ENCODE measurements at regions of chr12 and their contacts with region 1.

Region 1: DNA sequence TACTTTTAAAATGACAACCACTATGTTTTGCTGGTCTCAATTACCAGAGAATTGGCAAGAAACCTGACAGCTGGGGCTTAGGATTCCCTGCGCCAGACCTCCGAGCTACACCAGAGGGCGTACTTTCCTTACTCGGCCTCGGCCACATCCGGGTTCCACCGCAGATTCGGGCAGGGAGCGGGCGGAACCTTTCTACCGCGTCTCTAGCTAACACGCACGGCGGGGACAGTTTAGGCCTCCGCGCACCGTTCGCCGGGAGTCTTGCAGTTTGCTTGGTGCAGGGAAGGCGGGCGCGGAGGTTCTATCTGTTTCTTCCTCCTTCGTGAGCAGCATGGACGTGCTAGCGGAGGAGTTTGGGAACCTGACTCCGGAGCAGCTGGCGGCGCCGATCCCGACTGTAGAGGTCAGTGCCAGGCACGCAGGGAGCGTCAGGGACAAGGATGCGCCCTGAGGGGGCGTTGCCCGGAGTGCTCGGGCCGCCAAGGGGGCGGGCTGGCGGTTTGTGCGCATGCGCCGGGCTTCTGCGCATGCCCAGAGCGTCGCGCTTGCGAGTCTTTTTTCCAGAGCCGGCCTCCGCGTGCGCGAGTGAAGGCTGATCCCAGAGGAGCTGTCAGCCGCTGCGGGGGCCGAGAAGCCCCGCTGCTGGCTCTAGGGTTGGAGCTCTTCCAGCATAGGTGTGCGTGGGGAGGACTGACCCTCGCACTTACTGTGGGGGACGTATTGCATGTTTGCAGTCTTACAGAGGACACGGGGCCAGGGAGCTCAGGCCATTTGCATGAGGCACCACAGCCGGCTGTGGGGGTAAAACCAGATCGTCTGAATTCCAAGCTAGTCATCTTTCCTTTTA is at the start of gene POLR3B:
- DNase-seq: peak; percentile 95
- CTCF ChIP-seq: peak; percentile 87

Region 2: DNA sequence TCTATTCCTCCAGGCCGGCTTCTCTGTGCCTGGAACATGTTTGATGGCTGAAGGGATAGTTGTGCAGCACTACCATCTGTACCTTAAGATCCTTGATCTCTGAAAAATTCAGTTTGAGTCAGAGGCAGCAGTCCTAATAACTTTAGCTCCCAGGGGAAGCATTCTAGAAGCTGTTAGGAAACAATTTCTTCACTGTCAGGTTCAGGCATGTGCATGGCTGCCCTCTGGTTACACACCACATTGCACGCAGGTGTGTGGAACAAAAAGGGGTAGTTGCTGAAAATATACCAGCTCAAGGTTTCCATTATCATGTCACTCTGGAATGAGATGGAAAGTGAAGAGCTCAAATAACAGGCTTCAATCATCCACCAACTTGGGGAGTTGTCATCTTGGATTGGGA is 1820.9 kb before region 1 on chr12:
- CTCF ChIA-PET with region 1: no interaction called
- POLR2A ChIA-PET with region 1: no interaction called
- DNase-seq: no peak
- CTCF ChIP-seq: no peak

Region 3: DNA sequence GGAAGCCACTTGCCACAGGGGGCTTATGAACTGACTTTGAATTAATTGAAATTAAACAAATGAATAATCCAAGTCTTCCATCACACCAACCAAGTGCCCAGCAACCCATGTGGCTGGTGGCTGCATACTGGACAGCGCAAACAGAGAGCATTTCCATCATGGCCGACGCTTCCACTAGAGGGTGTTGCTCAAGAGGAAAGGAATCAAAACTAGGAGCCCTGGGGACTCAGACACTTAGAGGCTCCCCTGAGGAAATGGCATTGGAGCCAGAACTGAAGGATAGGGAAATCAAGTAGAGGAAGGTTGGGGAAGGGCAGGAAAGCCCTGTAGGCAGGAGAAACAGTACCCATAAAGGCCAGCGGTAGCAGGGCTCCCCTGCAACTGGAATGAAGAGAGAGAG is 168.4 kb before region 1 on chr12:
- CTCF ChIA-PET with region 1: no interaction called
- POLR2A ChIA-PET with region 1: no interaction called
- DNase-seq: no peak
- CTCF ChIP-seq: no peak

Region 4: GRCh38 chr12:106223485-106224354 is 134.1 kb before region 1 on chr12:
- CTCF ChIA-PET with region 1: interaction called, 10 read pairs
- POLR2A ChIA-PET with region 1: no interaction called
- DNase-seq: peak; percentile 83
- CTCF ChIP-seq: peak; percentile 99

Region 5: DNA sequence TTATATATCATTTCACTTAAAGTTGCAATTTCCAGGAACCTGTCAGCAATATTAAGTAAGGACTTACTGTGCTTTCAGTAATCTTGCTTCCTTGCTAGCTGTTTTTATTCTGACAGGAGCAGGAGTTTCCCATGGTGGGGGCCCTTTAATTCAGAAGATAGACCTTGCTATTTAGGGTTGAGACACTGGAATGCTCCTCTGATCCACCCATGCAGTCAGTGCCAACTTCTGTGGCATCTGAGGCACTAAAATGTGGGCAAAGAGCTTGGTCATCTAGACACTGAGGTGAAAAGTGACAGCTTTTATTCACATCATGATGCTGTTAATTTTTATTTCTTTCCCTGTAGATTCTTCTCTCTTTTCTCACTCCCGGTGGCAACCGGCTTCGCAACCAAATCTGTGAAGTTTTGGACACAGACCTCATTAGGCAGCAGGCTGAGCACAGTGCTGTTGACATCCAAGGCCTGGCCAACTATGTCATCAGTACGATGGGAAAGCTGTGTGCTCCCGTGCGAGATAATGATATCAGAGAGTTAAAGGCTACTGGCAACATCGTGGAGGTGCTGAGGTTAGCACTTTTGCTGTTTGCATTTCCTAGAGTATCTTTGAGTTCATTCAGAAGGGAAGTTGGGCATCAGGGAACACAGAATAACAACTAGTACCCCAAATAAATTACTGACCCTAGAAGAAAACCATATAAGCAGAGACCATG is 36.5 kb before region 1 on chr12:
- CTCF ChIA-PET with region 1: interaction called, 11 read pairs
- POLR2A ChIA-PET with region 1: no interaction called
- DNase-seq: no peak
- CTCF ChIP-seq: no peak

Region 6: GRCh38 chr12:106345739-106346138 is 12.0 kb before region 1 on chr12:
- CTCF ChIA-PET with region 1: interaction called, 16 read pairs
- POLR2A ChIA-PET with region 1: no interaction called
- DNase-seq: no peak
- CTCF ChIP-seq: no peak

Region 7: GRCh38 chr12:106378788-106379187 is 21.0 kb after region 1 on chr12:
- CTCF ChIA-PET with region 1: interaction called, 28 read pairs
- POLR2A ChIA-PET with region 1: no interaction called
- DNase-seq: no peak
- CTCF ChIP-seq: no peak

Region 8: DNA sequence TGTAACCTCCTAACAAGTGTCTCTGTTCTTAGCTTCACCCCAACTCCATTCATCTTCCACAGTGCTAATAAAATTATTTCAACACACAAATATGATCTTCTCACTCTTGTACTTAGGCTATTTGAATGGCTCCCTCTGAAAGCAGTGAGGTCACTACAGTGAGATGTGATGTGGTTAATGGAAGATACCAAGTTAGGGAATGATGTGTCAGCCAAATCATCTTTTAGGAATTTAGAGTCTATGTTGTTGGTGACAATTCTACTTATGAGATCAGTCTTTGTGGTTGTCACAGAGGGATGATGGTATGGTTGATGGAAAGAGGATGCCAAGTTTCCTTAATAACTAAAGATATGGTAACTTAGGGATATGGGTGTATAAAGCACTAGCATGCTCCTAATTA is 57.4 kb after region 1 on chr12:
- CTCF ChIA-PET with region 1: no interaction called
- POLR2A ChIA-PET with region 1: no interaction called
- DNase-seq: no peak
- CTCF ChIP-seq: no peak

Region 9: DNA sequence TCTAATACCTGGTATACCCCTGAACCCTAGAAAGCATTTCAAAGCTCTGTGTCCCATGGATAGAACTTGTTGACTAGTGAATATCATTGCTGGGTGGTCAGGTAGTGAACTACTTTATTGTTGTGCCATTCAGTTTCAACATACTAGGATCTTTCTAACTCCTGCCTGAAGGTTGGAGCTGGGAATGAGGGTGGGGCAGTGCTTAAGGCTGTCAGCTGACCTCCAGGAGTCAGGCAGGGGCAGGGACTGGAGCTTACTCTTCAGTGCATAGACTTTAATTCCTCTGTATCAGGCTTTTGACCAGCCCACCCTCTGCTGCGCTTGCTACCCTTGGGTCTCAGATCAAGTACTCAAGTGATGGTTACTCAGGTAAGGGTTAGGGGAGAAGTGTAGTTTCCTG is 122.5 kb after region 1 on chr12:
- CTCF ChIA-PET with region 1: no interaction called
- POLR2A ChIA-PET with region 1: no interaction called
- DNase-seq: no peak
- CTCF ChIP-seq: no peak

Region 10: DNA sequence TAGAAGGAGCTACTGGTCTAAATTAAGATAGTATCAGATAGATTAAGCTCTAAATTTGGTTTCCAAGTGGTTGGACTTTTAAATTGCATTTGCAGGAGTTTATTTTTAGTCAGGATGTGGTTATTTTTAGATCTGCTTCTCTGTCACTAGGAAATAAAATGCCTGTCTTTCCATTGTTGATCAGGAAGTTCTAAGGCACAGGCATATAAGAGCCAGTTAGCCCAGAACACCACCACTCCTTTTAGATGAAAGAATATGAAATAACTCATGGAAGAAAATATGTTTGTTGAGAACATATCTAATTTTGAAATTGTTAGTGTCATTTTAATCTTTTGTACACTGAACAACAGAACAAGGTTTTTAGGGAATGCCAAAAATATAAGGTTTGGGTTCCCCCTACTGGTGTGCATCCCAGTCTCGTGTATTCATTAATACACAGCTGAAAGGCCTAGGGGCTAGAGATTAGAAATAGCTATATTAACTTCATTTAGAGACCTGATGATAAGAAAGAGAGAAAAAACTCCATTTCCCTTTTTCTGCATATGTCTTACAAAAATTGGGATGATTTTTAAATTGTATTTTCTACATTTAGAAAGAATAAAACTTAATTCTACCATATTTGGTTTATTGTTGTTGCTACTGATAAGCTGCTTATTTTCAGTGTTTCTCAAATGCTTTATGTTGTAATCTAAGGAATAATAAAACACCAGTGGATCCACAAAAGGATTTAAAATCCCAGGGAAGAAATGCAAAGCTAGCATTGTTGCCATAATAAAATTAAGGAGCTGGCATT is 483.9 kb after region 1 on chr12:
- CTCF ChIA-PET with region 1: interaction called, 30 read pairs
- POLR2A ChIA-PET with region 1: no interaction called
- DNase-seq: peak; percentile 50
- CTCF ChIP-seq: peak; percentile 64

Region 11: DNA sequence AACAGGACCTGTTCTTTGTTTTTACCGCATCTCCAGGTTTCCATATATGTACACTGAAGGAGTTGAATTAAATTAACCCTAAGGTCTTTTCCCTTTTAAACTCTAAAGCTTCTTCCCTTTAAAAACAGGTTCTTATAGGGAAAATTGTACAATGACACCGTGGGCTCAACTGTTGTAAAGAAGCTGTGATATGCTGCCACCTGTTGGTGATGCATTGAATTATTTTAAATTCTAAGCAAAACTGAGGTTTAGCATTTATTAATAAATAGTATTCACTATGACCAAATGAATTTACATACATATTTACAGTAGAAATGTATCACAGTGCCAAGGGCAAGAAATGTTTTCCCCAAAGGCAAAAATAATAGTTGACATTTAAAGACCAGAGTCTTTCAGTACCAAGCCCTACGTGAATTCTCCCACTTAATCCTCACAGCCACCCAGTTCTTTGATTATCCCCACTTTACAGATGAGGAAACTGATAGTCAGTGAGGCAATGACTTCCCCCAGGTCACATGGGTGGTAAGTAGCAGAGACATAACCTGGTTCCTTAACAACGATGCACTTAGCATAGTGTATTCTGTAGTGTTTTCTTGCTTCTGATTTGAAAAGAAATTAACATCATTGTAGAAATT is 562.3 kb after region 1 on chr12:
- CTCF ChIA-PET with region 1: interaction called, 27 read pairs
- POLR2A ChIA-PET with region 1: no interaction called
- DNase-seq: no peak
- CTCF ChIP-seq: peak; percentile 71

Measured in GM10248 (cell line).